Gastrocnemius medialis (tissue), 4 donors: ENCODE measurements at regions of chr1 and their contacts with region 1.

Region 1: DNA sequence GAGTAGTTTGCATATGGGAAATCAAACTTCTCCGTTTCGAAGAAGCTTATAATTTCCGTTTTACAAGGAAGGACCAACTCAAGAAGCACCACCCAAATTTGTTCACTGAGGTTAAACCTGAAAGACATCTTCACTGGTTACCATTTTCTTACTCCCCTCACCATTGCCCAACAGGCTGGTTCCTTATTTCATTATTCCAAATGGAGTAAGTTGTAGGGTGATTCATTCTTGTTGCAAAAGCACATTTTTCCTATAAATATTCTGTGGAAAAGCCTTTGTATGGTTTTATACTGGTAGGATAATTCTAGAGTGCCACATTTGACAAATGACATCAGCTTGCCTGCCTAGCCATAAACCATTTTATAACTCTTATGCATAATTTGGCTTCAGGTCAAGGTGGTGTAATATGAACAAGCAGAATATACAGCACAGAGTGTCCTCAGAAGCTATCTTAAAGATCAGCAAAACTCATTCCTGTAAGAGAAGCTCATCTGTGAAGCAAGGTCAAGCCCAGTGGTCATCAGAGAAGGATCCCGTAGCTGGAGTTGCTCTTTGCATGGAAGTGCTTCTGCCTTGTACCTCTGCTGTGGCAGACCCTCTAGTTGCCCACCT is 24.1 kb upstream of the C1orf21 start:
- DNase-seq: peak; percentile 44 to 51
- ATAC-seq: peak; percentile 92 to 95
- H3K4me3 ChIP-seq: no peak overlapping the region
- H3K27ac ChIP-seq: peak overlapping the region; percentile 66 to 85 (median 78)
- H3K4me1 ChIP-seq: peaks cover 12 to 38% of the 10 kb centered on the region in 2 donors
- H3K27me3 ChIP-seq: no peaks in the 10 kb centered on the region
- CTCF ChIP-seq: no peak
- POLR2A ChIP-seq: no peak

Region 2: GRCh38 chr1:184296466-184297243 is 66.1 kb before region 1 on chr1:
- in situ Hi-C with region 1: no loop called
- intact Hi-C with region 1: loop called (anchors 5 kb)
- DNase-seq: peak; percentile 68 to 76
- ATAC-seq: peak; percentile 83 to 86
- H3K4me3 ChIP-seq: peak overlapping the region in 3 of 4 donors; percentile 3 to 27 (median 20)
- H3K27ac ChIP-seq: peak overlapping the region; percentile 70 to 86 (median 76)
- H3K4me1 ChIP-seq: peaks cover 19 to 60% of the 10 kb centered on the region in 2 donors
- H3K27me3 ChIP-seq: no peaks in the 10 kb centered on the region
- CTCF ChIP-seq: no peak
- POLR2A ChIP-seq: no peak

Region 3: GRCh38 chr1:184407816-184408537 is 45.2 kb after region 1 on chr1:
- in situ Hi-C with region 1: no loop called
- intact Hi-C with region 1: no loop called
- DNase-seq: no peak
- ATAC-seq: no peak
- H3K4me3 ChIP-seq: peak overlapping the region in 1 of 4 donors; percentile 15
- H3K27ac ChIP-seq: peak overlapping the region; percentile 28 to 64 (median 48)
- H3K4me1 ChIP-seq: peaks cover 78 to 90% of the 10 kb centered on the region in 2 donors
- H3K27me3 ChIP-seq: no peaks in the 10 kb centered on the region
- CTCF ChIP-seq: no peak
- POLR2A ChIP-seq: no peak